ENCODE measurements at regions of chr9 and their contacts with region 1.

Region 1: GRCh38 chr9:130107234-130107861 is 53.6 kb downstream of the GPR107 start:
- DNase-seq: peak; percentile 95
- H3K4me3 ChIP-seq: no peak overlapping the region
- H3K27ac ChIP-seq: no peak overlapping the region
- H3K4me1 ChIP-seq: peaks cover 13% of the 10 kb centered on the region
- H3K27me3 ChIP-seq: no peaks in the 10 kb centered on the region
- CTCF ChIP-seq: peak; percentile 75 to 88 (median 79)
- POLR2A ChIP-seq: no peak

Region 2: DNA sequence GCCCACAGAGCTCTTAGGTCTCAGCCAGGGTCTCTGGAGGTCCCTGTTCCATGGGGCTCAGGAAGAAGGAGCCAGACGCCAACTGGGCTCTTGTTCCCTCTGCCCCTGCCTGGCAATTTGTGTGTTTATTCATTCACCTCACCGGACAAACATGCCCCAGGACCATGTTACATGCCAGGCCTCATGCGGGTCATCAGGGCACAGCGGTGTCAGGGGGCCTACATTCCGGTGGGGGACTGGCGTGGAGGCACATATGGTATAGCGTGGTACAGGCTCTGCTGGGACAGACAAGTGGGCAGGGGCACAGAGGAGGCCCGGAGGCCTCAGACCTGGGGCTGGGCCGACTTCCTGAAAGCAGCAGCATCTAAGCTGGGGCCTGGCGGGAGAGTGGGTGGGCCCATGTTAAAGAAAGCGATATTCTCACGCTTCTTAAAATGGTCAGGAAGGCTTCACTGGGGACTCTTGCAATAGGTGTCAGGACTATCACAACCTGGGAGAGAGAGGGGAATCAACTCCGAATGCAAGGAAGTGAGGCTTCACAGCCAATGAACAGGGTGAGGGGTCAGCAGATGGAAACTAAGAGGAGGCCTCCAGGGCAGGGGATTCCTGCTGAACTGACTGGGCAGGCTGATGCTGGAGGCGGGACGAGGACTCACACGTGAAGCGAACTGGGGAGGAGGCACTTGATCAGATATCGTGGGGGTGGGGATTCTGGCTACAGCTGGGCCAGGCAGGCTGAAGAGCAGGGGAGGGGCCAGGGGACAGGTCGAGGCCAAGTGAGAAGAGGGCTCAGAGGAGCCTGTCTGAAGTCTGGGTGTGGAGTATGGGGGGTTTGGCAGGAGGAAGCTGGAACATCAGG is 106.8 kb after region 1 on chr9:
- intact Hi-C with region 1: no loop called
- DNase-seq: no peak
- H3K4me3 ChIP-seq: no peak overlapping the region
- H3K27ac ChIP-seq: no peak overlapping the region
- H3K4me1 ChIP-seq: no peaks in the 10 kb centered on the region
- H3K27me3 ChIP-seq: no peaks in the 10 kb centered on the region
- CTCF ChIP-seq: no peak
- POLR2A ChIP-seq: no peak

Region 3: DNA sequence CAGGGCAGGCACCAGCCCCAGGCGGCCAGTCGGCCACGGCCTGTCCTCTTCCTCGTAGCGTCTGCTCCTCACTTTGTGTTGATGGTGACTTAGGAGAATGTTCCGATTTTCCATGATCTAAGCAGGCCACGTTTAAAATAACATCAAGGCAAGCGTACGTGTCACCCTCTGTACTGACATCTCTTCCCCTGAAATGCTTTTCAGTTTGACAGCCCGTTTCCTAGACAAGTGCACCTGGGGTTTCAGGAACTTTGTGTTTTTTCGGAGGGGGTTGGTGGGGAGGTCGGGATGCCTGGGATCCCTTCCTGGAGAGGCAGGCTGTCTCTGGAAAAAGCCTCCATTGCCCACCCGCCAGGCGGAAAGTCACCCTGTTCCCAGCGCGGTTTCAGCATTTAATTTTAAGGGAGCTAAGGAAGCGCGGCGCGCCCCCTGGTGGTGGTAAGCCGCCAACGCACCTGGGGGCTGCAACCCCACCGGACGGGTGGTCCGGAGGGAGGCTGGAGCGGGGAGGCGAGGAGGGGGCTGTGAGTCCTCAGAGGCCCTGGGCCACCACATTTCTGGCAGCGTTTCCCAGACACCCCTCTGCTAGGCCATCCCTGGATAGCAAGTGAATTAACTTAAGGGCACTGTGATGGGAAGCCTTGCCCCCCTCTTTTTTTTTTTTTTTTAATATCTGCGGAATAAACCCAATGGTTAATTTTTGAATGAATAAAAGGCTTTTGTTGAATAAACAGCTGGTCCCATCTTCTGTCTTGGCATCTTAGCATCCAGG is 128.7 kb after region 1 on chr9:
- intact Hi-C with region 1: loop called (anchors 5 kb)
- DNase-seq: peak; percentile 78
- H3K4me3 ChIP-seq: no peak overlapping the region
- H3K27ac ChIP-seq: no peak overlapping the region
- H3K4me1 ChIP-seq: no peaks in the 10 kb centered on the region
- H3K27me3 ChIP-seq: no peaks in the 10 kb centered on the region
- CTCF ChIP-seq: peak; percentile 97 to 100 (median 98)
- POLR2A ChIP-seq: no peak